Adrenal gland (tissue), 19 donors: ENCODE measurements at regions of chr4 and their contacts with region 1.

Region 1: DNA sequence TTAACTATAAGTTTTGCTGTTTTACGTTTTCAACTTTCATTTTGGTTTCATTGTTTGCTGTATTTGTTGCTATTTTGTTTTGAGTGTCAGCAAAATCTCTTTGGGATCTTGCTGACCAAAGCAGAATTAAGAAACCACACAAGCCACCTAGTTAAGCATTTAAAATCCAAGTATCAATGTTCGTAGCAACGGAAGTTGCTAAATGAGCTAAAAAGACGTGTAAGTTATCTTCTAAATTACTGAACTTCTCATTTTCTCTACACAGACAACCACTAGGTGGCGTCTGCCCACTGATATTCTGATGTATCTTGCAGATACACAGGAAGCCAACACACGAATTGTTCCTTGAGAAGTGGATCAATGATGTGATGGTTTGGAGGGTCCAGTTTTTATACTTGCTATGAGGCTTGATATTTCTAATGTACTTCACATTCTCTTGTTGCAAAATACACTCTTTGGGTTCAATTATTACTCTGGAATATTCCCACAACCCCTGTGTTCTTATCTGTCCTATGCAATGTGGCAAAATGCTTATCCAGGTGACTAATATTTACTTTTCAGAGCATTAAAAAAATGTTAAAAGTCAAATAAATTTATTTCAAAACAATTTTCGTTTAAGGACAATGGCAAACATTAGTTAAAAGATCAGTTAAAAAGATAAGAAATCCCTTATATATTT is 250.5 kb downstream of the TECRL start:
- DNase-seq: peak; percentile 41 to 79 (median 60)
- H3K4me3 ChIP-seq: peak overlapping the region in 1 of 4 donors; percentile 46
- H3K27ac ChIP-seq: no peak overlapping the region
- H3K4me1 ChIP-seq: no peaks in the 10 kb centered on the region
- H3K27me3 ChIP-seq: no peaks in the 10 kb centered on the region
- CTCF ChIP-seq: peak; percentile 61 to 87 (median 64)
- POLR2A ChIP-seq: no peak

Region 2: DNA sequence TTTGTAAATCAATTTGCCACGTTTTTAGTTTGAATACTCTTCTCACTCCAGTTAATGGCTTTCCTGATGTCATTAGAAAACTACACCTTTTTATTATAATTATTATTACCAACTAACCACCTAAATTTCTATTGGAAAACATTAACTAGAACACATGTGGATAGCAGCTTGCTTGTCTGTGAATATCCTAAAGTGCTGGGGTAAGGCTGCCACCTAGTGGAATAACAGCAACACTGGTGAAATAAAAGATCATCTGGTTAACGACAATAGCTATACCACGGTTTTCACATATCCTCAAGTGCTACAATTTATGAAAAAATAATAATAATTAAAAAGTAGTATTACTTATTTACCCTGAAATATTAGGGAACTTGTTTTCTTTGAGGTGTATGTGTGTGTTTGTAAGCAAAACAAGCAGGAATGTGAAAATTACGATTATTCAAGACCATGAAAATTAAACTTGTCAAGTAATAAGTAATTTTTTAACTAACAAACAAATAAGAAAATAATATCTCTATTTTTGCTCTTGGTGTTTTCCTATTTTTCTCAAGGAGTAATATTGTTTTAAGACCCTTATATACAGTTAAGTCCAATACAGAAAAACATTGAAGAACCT is 380.6 kb after region 1 on chr4:
- intact Hi-C with region 1: loop called (anchors 5 to 10 kb)
- DNase-seq: peak; percentile 41 to 64 (median 59)
- H3K4me3 ChIP-seq: no peak overlapping the region
- H3K27ac ChIP-seq: no peak overlapping the region
- H3K4me1 ChIP-seq: no peaks in the 10 kb centered on the region
- H3K27me3 ChIP-seq: peaks cover 7% of the 10 kb centered on the region
- CTCF ChIP-seq: peak; percentile 64 to 84 (median 70)
- POLR2A ChIP-seq: no peak